Transverse colon (tissue), 4 donors: ENCODE measurements at regions of chr11 and their contacts with region 1.

Region 1: GRCh38 chr11:42363701-42364100 is 904.2 kb upstream of the LRRC4C start:
- DNase-seq: no peak
- H3K4me3 ChIP-seq: no peak overlapping the region
- H3K27ac ChIP-seq: no peak overlapping the region
- H3K4me1 ChIP-seq: no peaks in the 10 kb centered on the region
- H3K27me3 ChIP-seq: no peaks in the 10 kb centered on the region
- CTCF ChIP-seq: no peak
- EP300 ChIP-seq: no peak
- POLR2A ChIP-seq: no peak

Region 2: DNA sequence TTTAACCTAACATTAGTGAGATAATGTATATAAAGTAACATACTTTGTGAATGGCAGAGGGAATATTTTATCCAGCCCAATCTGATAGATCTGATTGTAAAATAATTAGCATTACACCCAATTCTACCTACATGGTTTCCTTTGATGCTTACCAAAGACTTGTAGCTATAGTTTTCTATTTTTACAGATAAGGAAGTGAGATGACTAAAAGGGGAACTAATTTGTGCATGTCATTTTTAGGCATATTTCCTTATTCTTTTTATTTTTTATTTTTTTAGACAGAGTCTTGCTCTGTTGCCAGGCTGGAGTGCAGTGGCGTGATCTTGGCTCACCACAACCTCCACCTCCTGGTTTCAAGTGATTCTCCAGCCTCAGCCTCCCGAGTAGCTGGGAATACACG is 110.5 kb before region 1 on chr11:
- in situ Hi-C with region 1: loop called in 1 of 4 experiments (anchors 25 kb)
- intact Hi-C with region 1: no loop called
- DNase-seq: no peak
- H3K4me3 ChIP-seq: no peak overlapping the region
- H3K27ac ChIP-seq: no peak overlapping the region
- H3K4me1 ChIP-seq: no peaks in the 10 kb centered on the region
- H3K27me3 ChIP-seq: no peaks in the 10 kb centered on the region
- CTCF ChIP-seq: no peak
- EP300 ChIP-seq: no peak
- POLR2A ChIP-seq: no peak

Region 3: GRCh38 chr11:42315267-42315666 is 48.4 kb before region 1 on chr11:
- in situ Hi-C with region 1: no loop called
- intact Hi-C with region 1: loop called (anchors 5 kb)
- DNase-seq: no peak
- H3K4me3 ChIP-seq: no peak overlapping the region
- H3K27ac ChIP-seq: no peak overlapping the region
- H3K4me1 ChIP-seq: no peaks in the 10 kb centered on the region
- H3K27me3 ChIP-seq: no peaks in the 10 kb centered on the region
- CTCF ChIP-seq: no peak
- EP300 ChIP-seq: no peak
- POLR2A ChIP-seq: no peak